HepG2 (cell line): ENCODE measurements at regions of chr2 and their contacts with region 1.

Region 1: DNA sequence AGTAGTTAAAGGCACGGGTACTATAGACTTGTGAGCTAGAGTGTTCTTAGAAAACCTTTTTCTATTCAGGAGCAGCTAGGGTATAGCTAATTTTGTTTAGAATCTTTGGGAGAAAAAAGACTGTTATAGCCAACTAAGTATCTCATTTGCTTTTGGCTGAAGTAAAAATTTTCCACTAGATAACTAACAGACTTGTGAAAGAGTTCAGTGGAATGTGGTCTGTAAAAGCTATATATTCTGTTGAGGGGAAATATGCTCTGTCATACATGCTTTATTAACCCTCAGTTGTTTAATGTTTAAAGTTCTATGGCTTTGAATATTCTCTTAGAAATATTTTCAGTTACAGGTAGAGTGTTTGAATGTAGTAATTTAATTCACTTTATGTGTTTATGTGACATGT is 49.7 kb downstream of the RIF1 start:
- DNase-seq: no peak
- ATAC-seq: no peak
- H3K4me3 ChIP-seq: no peak overlapping the region
- H3K27ac ChIP-seq: no peak overlapping the region
- H3K4me1 ChIP-seq: no peaks in the 10 kb centered on the region
- H3K27me3 ChIP-seq: no peaks in the 10 kb centered on the region
- CTCF ChIP-seq: no peak
- EP300 ChIP-seq: no peak
- POLR2A ChIP-seq: no peak
- RAD21 ChIP-seq: no peak

Region 2: DNA sequence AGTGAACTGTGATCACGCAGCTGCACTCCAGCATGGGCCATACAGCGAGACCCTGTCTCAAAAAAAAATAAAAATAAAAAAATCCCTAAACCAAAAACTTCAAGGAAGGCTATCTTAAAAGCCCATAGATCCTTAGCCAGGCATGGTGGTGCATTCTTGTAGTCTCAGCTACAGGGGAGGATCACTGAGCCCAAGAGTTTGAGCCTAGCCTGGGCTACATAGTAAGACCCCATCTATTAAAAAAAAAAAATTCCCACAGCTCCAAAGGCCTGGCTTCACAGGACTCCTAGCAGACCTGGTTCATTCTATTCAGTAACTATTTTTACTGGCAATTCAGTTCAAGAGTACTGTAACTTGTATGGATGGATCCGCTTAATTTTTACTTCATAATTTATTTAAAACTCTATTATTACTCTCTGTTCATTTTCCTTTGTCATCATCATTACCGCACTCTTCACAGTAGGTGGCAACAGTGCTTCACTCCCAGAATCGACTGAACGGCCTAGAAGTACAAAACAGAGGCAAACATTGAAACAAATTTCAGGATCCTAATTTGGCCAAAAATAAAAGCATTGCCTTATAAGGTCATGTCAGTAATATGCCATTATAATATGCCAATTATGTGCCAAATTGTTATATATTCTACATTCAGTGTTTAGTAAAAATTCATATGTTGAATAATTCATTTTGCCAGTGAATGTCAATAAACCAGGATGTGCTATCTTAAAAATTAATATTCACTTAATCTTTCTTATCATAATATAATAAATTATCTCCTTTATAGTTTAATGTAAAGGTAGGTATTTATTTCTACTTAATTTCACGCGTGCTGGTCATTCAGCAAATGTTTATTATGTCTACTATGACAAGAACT is 730.5 kb after region 1 on chr2:
- CTCF ChIA-PET with region 1: no interaction called
- POLR2A ChIA-PET with region 1: no interaction called
- in situ Hi-C with region 1: no loop called
- intact Hi-C with region 1: no loop called
- DNase-seq: peak; percentile 71
- ATAC-seq: peak; percentile 92
- H3K4me3 ChIP-seq: no peak overlapping the region
- H3K27ac ChIP-seq: no peak overlapping the region
- H3K4me1 ChIP-seq: peaks cover 18% of the 10 kb centered on the region; the same call in 1 of the 2 replicates
- H3K27me3 ChIP-seq: 0 out of 5 replicates have a peak, but pooled peaks cover 0 to 2% of the 10 kb centered on the region in 2 experiments
- CTCF ChIP-seq: peak; percentile 84
- EP300 ChIP-seq: no peak
- POLR2A ChIP-seq: no peak
- RAD21 ChIP-seq: peak; percentile 88

Region 3: GRCh38 chr2:152657043-152657442 is 1197.7 kb after region 1 on chr2:
- CTCF ChIA-PET with region 1: no interaction called
- POLR2A ChIA-PET with region 1: no interaction called
- in situ Hi-C with region 1: loop called (anchors 25 kb)
- intact Hi-C with region 1: no loop called
- DNase-seq: no peak
- ATAC-seq: no peak
- H3K4me3 ChIP-seq: no peak overlapping the region
- H3K27ac ChIP-seq: no peak overlapping the region
- H3K4me1 ChIP-seq: peaks cover 10% of the 10 kb centered on the region; the same call in 1 of the 2 replicates
- H3K27me3 ChIP-seq: no peaks in the 10 kb centered on the region
- CTCF ChIP-seq: no peak
- EP300 ChIP-seq: no peak
- POLR2A ChIP-seq: no peak
- RAD21 ChIP-seq: no peak